ENCODE measurements at regions of chr6 and their contacts with region 1.

Region 1: GRCh38 chr6:75208298-75209183 is 2.7 kb upstream of the COL12A1 start:
- DNase-seq: peak; percentile 87
- ATAC-seq: peak; percentile 80
- H3K4me3 ChIP-seq: peak overlapping the region in 4 of 5 experiments; percentile 10 to 41 (median 20)
- H3K4me3 Mint-ChIP-seq: peak overlapping the region; percentile 80
- H3K27ac ChIP-seq: no peak overlapping the region
- H3K27ac Mint-ChIP-seq: no peak overlapping the region
- H3K4me1 ChIP-seq: peaks cover 49 to 50% of the 10 kb centered on the region in 2 donors
- H3K4me1 Mint-ChIP-seq: peaks cover 52% of the 10 kb centered on the region
- H3K27me3 ChIP-seq: peaks cover 0 to 72% (median 52%) of the 10 kb centered on the region in 4 experiments
- H3K27me3 Mint-ChIP-seq: peaks cover 71% of the 10 kb centered on the region
- CTCF ChIP-seq: peak; percentile 84

Region 2: DNA sequence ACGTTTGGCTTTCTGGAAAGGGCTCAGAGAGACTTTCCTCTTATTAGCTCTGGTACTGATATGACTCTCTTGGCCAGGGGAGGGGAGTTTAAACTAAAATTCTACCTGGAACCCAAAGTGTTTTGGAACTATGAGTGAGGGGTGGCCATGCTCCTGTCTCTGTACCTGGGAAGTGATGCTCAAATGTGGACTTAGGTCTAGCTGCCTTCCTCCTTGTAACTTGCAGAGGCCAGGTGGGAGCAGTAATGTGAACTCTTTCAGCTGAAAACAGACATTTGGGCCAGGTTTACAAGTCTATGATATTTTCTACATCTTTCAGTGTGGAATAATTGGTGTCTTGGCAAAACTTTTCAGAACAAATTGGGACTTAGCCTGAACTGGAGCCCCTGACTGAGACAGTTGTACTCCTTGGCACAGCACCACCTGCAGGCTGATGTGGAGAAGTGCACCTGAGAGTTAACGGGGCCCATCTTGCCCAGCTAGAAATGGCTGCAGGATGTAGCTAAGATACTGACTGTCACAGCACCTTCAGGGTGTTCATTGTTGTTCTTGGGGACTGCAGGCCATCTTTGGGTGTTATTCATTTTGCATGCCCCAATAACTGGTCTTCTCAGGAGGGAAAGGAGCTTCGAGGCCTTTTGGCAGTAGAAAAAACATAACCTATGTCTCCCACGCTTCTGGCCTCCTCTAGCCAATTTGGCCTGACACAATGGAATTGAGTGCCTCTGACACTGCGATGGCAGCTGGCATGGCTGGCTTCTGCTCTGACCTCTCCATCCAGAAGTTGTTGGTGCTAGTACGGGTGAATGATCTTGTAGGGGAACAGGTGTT is 1475.5 kb before region 1 on chr6:
- CTCF ChIA-PET with region 1: interaction called, 388 read pairs
- POLR2A ChIA-PET with region 1: no interaction called
- intact Hi-C with region 1: no loop called
- DNase-seq: peak; percentile 65
- ATAC-seq: peak; percentile 89
- H3K4me3 ChIP-seq: no peak overlapping the region
- H3K4me3 Mint-ChIP-seq: no peak overlapping the region
- H3K27ac ChIP-seq: no peak overlapping the region
- H3K27ac Mint-ChIP-seq: no peak overlapping the region
- H3K4me1 ChIP-seq: no peaks in the 10 kb centered on the region
- H3K4me1 Mint-ChIP-seq: no peaks in the 10 kb centered on the region
- H3K27me3 ChIP-seq: no peaks in the 10 kb centered on the region
- H3K27me3 Mint-ChIP-seq: no peaks in the 10 kb centered on the region
- CTCF ChIP-seq: peak; percentile 84

Region 3: GRCh38 chr6:73747289-73747688 is 1461.3 kb before region 1 on chr6:
- CTCF ChIA-PET with region 1: interaction called, 388 read pairs
- POLR2A ChIA-PET with region 1: no interaction called
- intact Hi-C with region 1: no loop called
- DNase-seq: peak; percentile 55
- ATAC-seq: peak; percentile 57
- H3K4me3 ChIP-seq: peak overlapping the region in 4 of 5 experiments; percentile 11 to 53 (median 39)
- H3K4me3 Mint-ChIP-seq: no peak overlapping the region
- H3K27ac ChIP-seq: peak overlapping the region; percentile 33 to 73
- H3K27ac Mint-ChIP-seq: no peak overlapping the region
- H3K4me1 ChIP-seq: peaks cover 10 to 12% of the 10 kb centered on the region in 2 donors
- H3K4me1 Mint-ChIP-seq: peaks cover 4% of the 10 kb centered on the region
- H3K27me3 ChIP-seq: no peaks in the 10 kb centered on the region
- H3K27me3 Mint-ChIP-seq: no peaks in the 10 kb centered on the region
- CTCF ChIP-seq: no peak

Region 4: DNA sequence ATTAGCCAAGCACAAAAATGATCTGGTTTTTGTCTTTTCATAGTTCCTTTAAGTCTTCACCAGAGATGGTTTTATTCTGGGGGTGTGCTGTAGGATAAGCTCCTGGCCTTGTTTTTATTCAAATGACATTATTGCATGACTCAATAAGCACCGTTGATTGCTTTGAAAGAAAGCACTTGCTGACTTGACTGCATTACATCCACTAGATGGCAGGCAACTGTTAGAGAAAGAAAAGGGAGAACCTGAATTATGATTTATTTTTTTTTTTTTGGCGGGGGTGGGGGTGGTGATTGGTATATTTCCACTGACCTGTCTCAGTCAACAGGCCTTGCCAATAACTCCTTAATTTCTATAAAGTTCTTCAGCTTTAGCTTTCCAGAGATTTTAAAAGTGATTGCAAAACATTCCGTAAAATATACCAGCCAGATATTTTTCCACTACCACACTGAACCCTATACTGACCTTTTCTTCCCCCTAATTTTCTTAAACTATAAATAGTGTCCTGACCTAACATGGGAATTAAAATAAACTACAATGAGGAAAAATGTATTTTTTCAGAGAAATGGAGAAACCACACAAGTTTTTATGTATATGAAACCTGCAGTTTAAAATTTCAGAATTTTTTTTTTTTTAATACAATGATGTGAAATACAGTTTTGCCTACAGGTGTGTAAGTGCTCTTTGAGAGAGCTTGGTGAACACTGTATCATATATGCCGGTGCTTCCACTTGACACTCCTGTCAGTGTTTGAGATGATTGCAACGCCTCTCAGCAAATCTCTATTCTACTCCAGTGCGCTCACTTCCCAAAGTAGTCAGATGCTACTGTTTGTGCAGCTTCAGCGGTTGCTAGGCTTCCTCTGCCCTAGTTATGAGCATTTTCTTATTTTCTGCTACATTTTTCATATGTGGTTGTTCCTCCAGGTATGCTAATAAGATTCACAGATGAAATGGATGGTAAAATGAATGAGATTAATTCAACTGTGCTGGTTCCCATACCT is 1238.3 kb before region 1 on chr6:
- CTCF ChIA-PET with region 1: interaction called, 11 read pairs
- POLR2A ChIA-PET with region 1: no interaction called
- intact Hi-C with region 1: no loop called
- DNase-seq: no peak
- ATAC-seq: no peak
- H3K4me3 ChIP-seq: no peak overlapping the region
- H3K4me3 Mint-ChIP-seq: no peak overlapping the region
- H3K27ac ChIP-seq: no peak overlapping the region
- H3K27ac Mint-ChIP-seq: no peak overlapping the region
- H3K4me1 ChIP-seq: no peaks in the 10 kb centered on the region
- H3K4me1 Mint-ChIP-seq: no peaks in the 10 kb centered on the region
- H3K27me3 ChIP-seq: no peaks in the 10 kb centered on the region
- H3K27me3 Mint-ChIP-seq: no peaks in the 10 kb centered on the region
- CTCF ChIP-seq: no peak

Region 5: DNA sequence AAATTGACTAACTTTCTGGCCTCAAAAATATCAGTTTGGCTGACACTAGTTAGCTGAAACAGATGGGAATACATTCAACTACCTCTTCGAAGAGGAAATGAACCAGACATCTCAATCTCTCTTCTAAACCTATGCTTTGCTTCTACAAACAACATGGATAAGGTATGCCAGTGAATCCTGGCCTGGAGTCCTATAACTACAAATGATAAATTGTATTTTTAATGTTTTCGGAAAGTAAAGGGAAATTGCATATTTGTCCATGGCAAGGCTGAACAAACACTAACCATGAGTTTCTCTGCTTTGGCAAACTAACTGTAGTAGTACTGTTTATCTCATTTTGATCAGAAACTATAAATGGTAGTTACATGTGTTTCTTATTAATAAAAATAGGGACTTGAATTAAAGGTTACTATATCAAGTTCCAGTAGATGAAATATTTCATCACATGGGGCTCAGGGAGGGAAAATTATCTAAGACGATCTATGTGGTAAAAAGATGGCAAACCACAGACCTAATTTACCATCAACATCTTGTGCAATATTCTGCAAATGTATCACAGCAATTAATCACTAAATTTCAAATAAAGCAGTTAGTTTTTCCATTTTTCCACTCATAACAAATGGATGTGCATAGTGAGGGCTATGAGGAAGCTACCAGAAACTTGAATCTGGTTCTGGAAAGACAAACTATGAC is 79.5 kb before region 1 on chr6:
- CTCF ChIA-PET with region 1: no interaction called
- POLR2A ChIA-PET with region 1: no interaction called
- intact Hi-C with region 1: no loop called
- DNase-seq: no peak
- ATAC-seq: no peak
- H3K4me3 ChIP-seq: no peak overlapping the region
- H3K4me3 Mint-ChIP-seq: no peak overlapping the region
- H3K27ac ChIP-seq: no peak overlapping the region
- H3K27ac Mint-ChIP-seq: no peak overlapping the region
- H3K4me1 ChIP-seq: no peaks in the 10 kb centered on the region
- H3K4me1 Mint-ChIP-seq: no peaks in the 10 kb centered on the region
- H3K27me3 ChIP-seq: no peaks in the 10 kb centered on the region
- H3K27me3 Mint-ChIP-seq: no peaks in the 10 kb centered on the region
- CTCF ChIP-seq: no peak

Region 6: GRCh38 chr6:75230484-75231325 is 22.2 kb after region 1 on chr6:
- CTCF ChIA-PET with region 1: interaction called, 15 read pairs
- POLR2A ChIA-PET with region 1: no interaction called
- intact Hi-C with region 1: no loop called
- DNase-seq: no peak
- ATAC-seq: no peak
- H3K4me3 ChIP-seq: no peak overlapping the region
- H3K4me3 Mint-ChIP-seq: no peak overlapping the region
- H3K27ac ChIP-seq: no peak overlapping the region
- H3K27ac Mint-ChIP-seq: no peak overlapping the region
- H3K4me1 ChIP-seq: no peaks in the 10 kb centered on the region
- H3K4me1 Mint-ChIP-seq: no peaks in the 10 kb centered on the region
- H3K27me3 ChIP-seq: no peaks in the 10 kb centered on the region
- H3K27me3 Mint-ChIP-seq: peaks cover 10% of the 10 kb centered on the region
- CTCF ChIP-seq: no peak

Region 7: GRCh38 chr6:75946146-75946831 is 737.7 kb after region 1 on chr6:
- CTCF ChIA-PET with region 1: no interaction called
- POLR2A ChIA-PET with region 1: no interaction called
- intact Hi-C with region 1: no loop called
- DNase-seq: no peak
- ATAC-seq: no peak
- H3K4me3 ChIP-seq: no peak overlapping the region
- H3K4me3 Mint-ChIP-seq: no peak overlapping the region
- H3K27ac ChIP-seq: no peak overlapping the region
- H3K27ac Mint-ChIP-seq: no peak overlapping the region
- H3K4me1 ChIP-seq: no peaks in the 10 kb centered on the region
- H3K4me1 Mint-ChIP-seq: peaks cover 7% of the 10 kb centered on the region
- H3K27me3 ChIP-seq: no peaks in the 10 kb centered on the region
- H3K27me3 Mint-ChIP-seq: no peaks in the 10 kb centered on the region
- CTCF ChIP-seq: no peak